Activated CD4-positive, alpha-beta T cell treated with anti-CD3 and anti-CD28 coated beads, Interleukin-2, amount 10 ng/mL, durations not matched to agents 7 days and 5 days (primary cell): ENCODE measurements at regions of chr5 and their contacts with region 1.

Region 1: GRCh38 chr5:172714491-172715421 is 56.2 kb downstream of the DUSP1 start:
- DNase-seq: peak; percentile 68
- H3K4me3 Mint-ChIP-seq: no peak overlapping the region
- H3K27ac Mint-ChIP-seq: no peak overlapping the region
- H3K4me1 Mint-ChIP-seq: peaks cover 4% of the 10 kb centered on the region
- H3K27me3 Mint-ChIP-seq: peaks cover 4% of the 10 kb centered on the region

Region 2: GRCh38 chr5:172926796-172927195 is 212.0 kb after region 1 on chr5:
- CTCF ChIA-PET with region 1: interaction called, 52 read pairs
- POLR2A ChIA-PET with region 1: no interaction called
- DNase-seq: no peak
- H3K4me3 Mint-ChIP-seq: no peak overlapping the region
- H3K27ac Mint-ChIP-seq: peak overlapping the region; percentile 3
- H3K4me1 Mint-ChIP-seq: no peaks in the 10 kb centered on the region
- H3K27me3 Mint-ChIP-seq: no peaks in the 10 kb centered on the region

Region 3: GRCh38 chr5:172932313-172933017 is 217.7 kb after region 1 on chr5:
- CTCF ChIA-PET with region 1: interaction called, 52 read pairs
- POLR2A ChIA-PET with region 1: no interaction called
- DNase-seq: peak; percentile 73
- H3K4me3 Mint-ChIP-seq: no peak overlapping the region
- H3K27ac Mint-ChIP-seq: no peak overlapping the region
- H3K4me1 Mint-ChIP-seq: peaks cover 2% of the 10 kb centered on the region
- H3K27me3 Mint-ChIP-seq: no peaks in the 10 kb centered on the region

Region 4: DNA sequence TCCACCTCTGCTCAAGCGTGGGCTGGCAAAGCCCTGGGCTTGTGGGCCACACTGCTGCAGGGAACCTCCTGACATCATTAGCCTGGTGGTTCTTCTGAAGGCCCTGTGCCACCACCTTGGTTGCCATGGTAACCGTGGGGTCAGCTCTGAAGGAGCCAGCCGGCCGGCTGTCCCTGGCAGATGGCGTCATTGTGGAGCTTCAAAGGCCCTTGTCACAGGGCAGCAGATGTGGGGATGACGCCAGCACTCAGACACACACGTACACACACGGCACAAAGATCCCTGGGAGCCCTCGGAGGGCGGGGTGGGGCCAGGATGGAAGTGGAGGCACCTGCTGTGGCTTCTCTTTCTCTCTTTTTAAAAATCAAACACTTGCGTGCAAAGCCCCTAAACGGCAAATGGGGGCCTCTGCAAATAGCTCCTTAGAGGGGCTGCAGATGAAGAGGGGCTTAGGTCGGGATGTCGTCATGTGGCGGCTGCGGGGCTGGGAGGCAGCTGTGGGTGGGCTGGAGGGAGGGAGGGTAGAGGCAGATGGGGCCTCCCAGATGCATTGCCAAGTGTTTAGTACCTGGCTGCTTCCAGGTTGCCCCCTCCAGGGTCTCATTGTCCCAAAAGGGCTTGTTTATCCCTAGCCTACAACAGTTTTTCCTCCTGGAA is 225.0 kb after region 1 on chr5:
- CTCF ChIA-PET with region 1: interaction called, 52 read pairs
- POLR2A ChIA-PET with region 1: no interaction called
- DNase-seq: no peak
- H3K4me3 Mint-ChIP-seq: no peak overlapping the region
- H3K27ac Mint-ChIP-seq: no peak overlapping the region
- H3K4me1 Mint-ChIP-seq: no peaks in the 10 kb centered on the region
- H3K27me3 Mint-ChIP-seq: no peaks in the 10 kb centered on the region